Mucosa of descending colon (tissue), 3 donors: ENCODE measurements at regions of chr2 and their contacts with region 1.

Region 1: DNA sequence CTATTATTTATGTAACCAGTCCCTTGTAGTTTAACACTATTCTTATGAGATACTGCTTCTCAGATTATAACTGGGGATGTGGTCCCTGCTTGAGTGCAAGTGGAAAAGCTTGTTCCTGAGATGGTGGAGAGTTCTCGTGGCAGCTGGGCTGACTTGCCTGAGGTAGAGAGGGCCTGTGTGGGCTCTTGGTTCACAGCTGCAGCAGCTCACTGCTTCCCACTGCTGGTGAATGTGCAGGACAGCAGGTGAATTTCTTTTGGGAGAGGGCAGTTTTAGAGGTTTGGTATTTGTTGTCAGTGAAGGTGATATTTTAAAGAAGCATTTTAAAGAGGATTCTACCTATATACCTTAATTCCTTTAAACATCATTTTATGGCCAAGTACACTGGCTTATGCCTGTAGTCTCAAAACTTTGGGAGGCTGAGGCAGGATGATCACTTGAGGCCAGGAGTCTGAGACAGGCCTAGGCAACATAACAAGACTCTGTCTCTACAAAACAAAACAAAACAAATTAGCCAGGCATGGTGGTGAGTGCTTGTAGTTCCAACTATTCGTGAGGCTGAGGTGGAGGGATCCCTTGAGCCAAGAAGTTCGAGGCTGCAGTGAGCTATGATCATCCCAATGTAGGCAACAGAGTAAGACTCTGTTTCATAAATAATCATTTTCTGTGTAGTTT is 94.8 kb downstream of the MTA3 start:
- DNase-seq: peak; percentile 59 to 64 (median 63)
- ATAC-seq: peak; percentile 99
- H3K4me3 ChIP-seq: no peak overlapping the region
- H3K4me1 ChIP-seq: no peaks in the 10 kb centered on the region
- CTCF ChIP-seq: peak; percentile 79

Region 2: DNA sequence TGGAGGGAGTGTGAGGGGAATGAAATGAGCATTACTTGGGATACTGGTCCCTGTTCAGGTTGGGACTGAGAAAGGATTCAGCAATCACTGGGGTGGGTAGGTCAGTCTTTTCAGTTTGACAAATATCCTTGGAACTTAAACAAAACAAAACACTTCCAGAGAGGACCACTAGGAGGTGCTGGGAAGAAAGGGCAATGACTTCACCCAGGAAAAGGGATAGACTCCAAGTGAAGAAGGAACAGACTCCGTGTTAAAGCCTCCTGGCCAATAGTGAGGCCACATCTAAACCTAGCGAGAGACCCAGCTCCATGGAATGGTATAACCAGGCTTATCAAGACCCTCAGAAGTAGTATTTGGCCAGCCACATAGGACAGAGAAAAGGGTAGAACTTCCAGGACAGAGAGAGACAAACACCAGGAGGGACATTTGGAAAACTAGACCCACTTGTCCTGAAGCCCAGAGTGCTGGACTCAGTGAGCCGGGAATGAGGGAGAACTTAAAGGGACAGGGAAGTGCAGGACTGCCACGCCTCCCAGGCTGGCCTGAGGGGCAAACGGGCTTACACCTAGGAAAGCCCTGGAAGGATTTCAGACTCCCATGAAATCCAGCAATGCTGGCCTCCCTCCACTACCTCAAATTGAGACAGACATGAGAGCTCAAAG is 149.9 kb before region 1 on chr2:
- intact Hi-C with region 1: loop called (anchors 5 kb)
- DNase-seq: peak in 2 of 3 donors; percentile 33 to 80
- ATAC-seq: peak; percentile 97
- H3K4me3 ChIP-seq: no peak overlapping the region
- H3K4me1 ChIP-seq: no peaks in the 10 kb centered on the region
- CTCF ChIP-seq: peak; percentile 69

Region 3: GRCh38 chr2:42693013-42693615 is 29.9 kb after region 1 on chr2:
- intact Hi-C with region 1: no loop called
- DNase-seq: no peak
- ATAC-seq: no peak
- H3K4me3 ChIP-seq: no peak overlapping the region
- H3K4me1 ChIP-seq: no peaks in the 10 kb centered on the region
- CTCF ChIP-seq: no peak

Region 4: GRCh38 chr2:42777883-42778805 is 114.9 kb after region 1 on chr2:
- intact Hi-C with region 1: no loop called
- DNase-seq: no peak
- ATAC-seq: no peak
- H3K4me3 ChIP-seq: no peak overlapping the region
- H3K4me1 ChIP-seq: no peaks in the 10 kb centered on the region
- CTCF ChIP-seq: no peak